Activated B cell treated with CpG ODN at 0.5 μM for 24 hours (primary cell): ENCODE measurements at regions of chr10 and their contacts with region 1.

Region 1: DNA sequence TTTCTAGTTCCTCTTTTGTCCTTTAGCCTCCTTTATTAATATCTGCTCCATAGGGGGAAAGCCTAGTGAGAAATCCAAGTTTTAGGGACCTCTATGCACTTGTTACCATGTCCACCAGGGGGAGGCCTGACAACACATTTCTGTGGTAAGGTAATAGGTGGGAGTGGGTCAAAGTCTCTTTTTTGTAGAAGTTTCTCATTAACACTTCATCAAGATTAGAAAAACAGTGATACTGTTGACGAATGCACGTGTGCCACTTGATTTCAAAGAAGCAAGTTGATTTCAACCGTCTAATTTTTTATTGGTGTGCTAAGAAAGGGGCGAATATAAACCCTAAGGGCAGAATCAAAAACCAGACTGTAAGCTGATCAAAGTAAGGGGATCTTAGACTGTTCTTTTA is 30.6 kb downstream of the CISD1 start:
- DNase-seq: peak; percentile 33
- ATAC-seq: peak; percentile 84
- H3K4me3 Mint-ChIP-seq: no peak overlapping the region
- H3K27ac Mint-ChIP-seq: no peak overlapping the region
- H3K4me1 Mint-ChIP-seq: no peaks in the 10 kb centered on the region
- H3K27me3 Mint-ChIP-seq: peaks cover 9% of the 10 kb centered on the region
- CTCF ChIP-seq: peak; percentile 63

Region 2: DNA sequence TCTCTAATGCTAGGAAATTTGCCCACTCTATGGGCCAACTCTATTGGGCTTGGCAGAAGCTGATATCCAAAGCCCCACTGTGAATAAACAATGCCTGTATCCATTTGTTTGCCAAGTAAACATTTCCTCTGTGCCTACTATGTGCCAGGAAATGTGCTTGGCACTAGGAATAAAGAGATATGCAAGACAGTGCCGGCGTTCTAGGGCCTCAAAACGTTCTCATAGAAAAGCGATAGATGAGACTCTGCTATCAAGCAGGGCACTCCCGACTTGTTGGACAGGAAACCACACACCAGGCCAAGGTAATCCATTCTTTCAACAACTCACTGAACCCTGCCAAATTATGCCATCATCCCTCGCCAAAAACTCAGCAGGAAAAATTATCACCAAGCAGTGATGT is 228.6 kb before region 1 on chr10:
- CTCF ChIA-PET with region 1: no interaction called
- POLR2A ChIA-PET with region 1: no interaction called
- intact Hi-C with region 1: loop called (anchors 10 kb)
- DNase-seq: no peak
- ATAC-seq: no peak
- H3K4me3 Mint-ChIP-seq: no peak overlapping the region
- H3K27ac Mint-ChIP-seq: no peak overlapping the region
- H3K4me1 Mint-ChIP-seq: no peaks in the 10 kb centered on the region
- H3K27me3 Mint-ChIP-seq: no peaks in the 10 kb centered on the region
- CTCF ChIP-seq: no peak

Region 3: GRCh38 chr10:58177362-58177947 is 122.1 kb before region 1 on chr10:
- CTCF ChIA-PET with region 1: interaction called, 170 read pairs
- POLR2A ChIA-PET with region 1: no interaction called
- intact Hi-C with region 1: no loop called
- DNase-seq: no peak
- ATAC-seq: no peak
- H3K4me3 Mint-ChIP-seq: no peak overlapping the region
- H3K27ac Mint-ChIP-seq: no peak overlapping the region
- H3K4me1 Mint-ChIP-seq: no peaks in the 10 kb centered on the region
- H3K27me3 Mint-ChIP-seq: peaks cover 2% of the 10 kb centered on the region
- CTCF ChIP-seq: no peak

Region 4: DNA sequence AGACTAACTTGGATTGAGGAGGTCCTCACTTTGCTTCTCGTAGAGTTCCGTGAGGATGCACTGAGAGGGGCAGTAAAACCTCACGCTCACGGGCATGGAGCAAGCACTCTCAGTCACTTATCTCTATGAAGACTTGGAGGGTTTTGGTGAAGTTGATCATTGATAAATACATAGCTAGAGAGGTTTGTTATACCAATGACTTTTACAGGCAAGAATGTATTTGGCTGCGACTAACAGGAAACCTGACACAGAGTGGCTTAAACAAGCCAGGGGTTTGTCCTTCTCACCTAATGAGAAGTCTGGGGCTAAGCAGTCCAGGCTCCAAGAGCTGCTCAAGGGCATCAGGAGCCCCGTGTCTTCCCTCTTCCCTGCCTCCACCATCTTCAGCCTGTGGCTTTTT is 219.2 kb after region 1 on chr10:
- CTCF ChIA-PET with region 1: no interaction called
- POLR2A ChIA-PET with region 1: no interaction called
- intact Hi-C with region 1: loop called (anchors 5 kb)
- DNase-seq: no peak
- ATAC-seq: no peak
- H3K4me3 Mint-ChIP-seq: no peak overlapping the region
- H3K27ac Mint-ChIP-seq: no peak overlapping the region
- H3K4me1 Mint-ChIP-seq: peaks cover 3% of the 10 kb centered on the region
- H3K27me3 Mint-ChIP-seq: peaks cover 24% of the 10 kb centered on the region
- CTCF ChIP-seq: no peak

Region 5: GRCh38 chr10:58531084-58531695 is 231.6 kb after region 1 on chr10:
- CTCF ChIA-PET with region 1: interaction called, 9 read pairs
- POLR2A ChIA-PET with region 1: interaction called, 3 read pairs
- intact Hi-C with region 1: loop called (anchors 1 kb)
- DNase-seq: no peak
- ATAC-seq: peak; percentile 70
- H3K4me3 Mint-ChIP-seq: no peak overlapping the region
- H3K27ac Mint-ChIP-seq: no peak overlapping the region
- H3K4me1 Mint-ChIP-seq: no peaks in the 10 kb centered on the region
- H3K27me3 Mint-ChIP-seq: no peaks in the 10 kb centered on the region
- CTCF ChIP-seq: no peak

Region 6: GRCh38 chr10:58781873-58782488 is 482.4 kb after region 1 on chr10:
- CTCF ChIA-PET with region 1: interaction called, 3 read pairs
- POLR2A ChIA-PET with region 1: no interaction called
- intact Hi-C with region 1: loop called (anchors 2 kb)
- DNase-seq: no peak
- ATAC-seq: no peak
- H3K4me3 Mint-ChIP-seq: no peak overlapping the region
- H3K27ac Mint-ChIP-seq: no peak overlapping the region
- H3K4me1 Mint-ChIP-seq: no peaks in the 10 kb centered on the region
- H3K27me3 Mint-ChIP-seq: no peaks in the 10 kb centered on the region
- CTCF ChIP-seq: no peak